ENCODE measurements at regions of chr11 and their contacts with region 1.

Region 1: GRCh38 chr11:19511413-19512183 is 201.0 kb upstream of the NAV2 start:
- DNase-seq: no peak
- H3K4me3 ChIP-seq: no peak overlapping the region
- H3K27ac ChIP-seq: no peak overlapping the region
- H3K27me3 ChIP-seq: peaks cover 11% of the 10 kb centered on the region
- CTCF ChIP-seq: no peak

Region 2: GRCh38 chr11:18939314-18939713 is 572.3 kb before region 1 on chr11 and contains the start of gene MRGPRX1:
- in situ Hi-C with region 1: no loop called
- DNase-seq: no peak
- H3K4me3 ChIP-seq: no peak within 1 kb of the TSS
- H3K27ac ChIP-seq: no peak within 1 kb of the TSS
- H3K27me3 ChIP-seq: no peaks in the 10 kb centered on the region
- CTCF ChIP-seq: no peak

Region 3: DNA sequence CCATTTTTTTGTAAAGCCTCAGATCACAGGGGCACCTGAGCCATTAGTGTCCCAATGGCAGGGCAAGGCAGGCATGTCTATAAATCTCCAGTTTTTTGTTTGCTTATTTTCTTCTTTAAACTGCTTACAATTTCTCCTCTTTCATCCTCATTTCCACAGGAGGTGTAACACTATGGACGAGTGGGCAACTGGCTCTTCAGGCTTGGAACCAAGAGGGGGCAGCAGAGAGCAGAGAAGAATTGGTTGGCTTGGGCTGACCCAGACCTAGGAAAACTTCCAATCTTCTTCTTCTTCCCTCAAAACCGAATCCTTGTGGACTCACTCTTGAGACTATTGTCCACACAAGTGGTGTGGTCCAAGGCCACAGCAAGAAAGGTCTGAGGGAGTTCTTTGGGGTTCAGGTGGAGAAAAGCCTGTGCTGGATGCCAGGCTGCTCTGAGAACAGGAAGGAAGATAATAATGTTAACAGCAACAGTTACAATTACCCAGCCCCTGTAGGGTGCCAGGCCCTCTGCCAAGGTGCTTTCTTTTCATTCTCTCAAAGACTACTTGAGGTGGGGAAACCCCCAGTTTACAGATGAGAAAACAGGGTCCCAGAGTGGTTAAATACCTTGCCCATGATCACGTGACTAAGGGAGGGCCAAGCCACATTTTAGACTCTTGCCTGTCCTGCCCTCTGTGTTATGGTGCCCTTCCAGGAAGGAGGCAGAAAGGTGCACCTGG is 200.1 kb before region 1 on chr11:
- in situ Hi-C with region 1: loop called (anchors 25 kb)
- DNase-seq: peak; percentile 49
- H3K4me3 ChIP-seq: no peak overlapping the region
- H3K27ac ChIP-seq: no peak overlapping the region
- H3K27me3 ChIP-seq: no peaks in the 10 kb centered on the region
- CTCF ChIP-seq: peak; percentile 96